ENCODE measurements at regions of chr1 and their contacts with region 1.

Region 1: GRCh38 chr1:201511941-201512539 is 5.1 kb upstream of the CSRP1 start:
- DNase-seq: no peak
- H3K4me3 ChIP-seq: no peak overlapping the region
- H3K27ac ChIP-seq: no peak overlapping the region
- H3K4me1 ChIP-seq: peaks cover 3 to 5% (median 5%) of the 10 kb centered on the region in 4 experiments; a peak in 6 of 7 replicates
- H3K27me3 ChIP-seq: peaks cover under 1 to 18% (median 12%) of the 10 kb centered on the region in 4 experiments
- CTCF ChIP-seq: no peak
- EP300 ChIP-seq: no peak
- POLR2A ChIP-seq: no peak
- RAD21 ChIP-seq: no peak

Region 2: DNA sequence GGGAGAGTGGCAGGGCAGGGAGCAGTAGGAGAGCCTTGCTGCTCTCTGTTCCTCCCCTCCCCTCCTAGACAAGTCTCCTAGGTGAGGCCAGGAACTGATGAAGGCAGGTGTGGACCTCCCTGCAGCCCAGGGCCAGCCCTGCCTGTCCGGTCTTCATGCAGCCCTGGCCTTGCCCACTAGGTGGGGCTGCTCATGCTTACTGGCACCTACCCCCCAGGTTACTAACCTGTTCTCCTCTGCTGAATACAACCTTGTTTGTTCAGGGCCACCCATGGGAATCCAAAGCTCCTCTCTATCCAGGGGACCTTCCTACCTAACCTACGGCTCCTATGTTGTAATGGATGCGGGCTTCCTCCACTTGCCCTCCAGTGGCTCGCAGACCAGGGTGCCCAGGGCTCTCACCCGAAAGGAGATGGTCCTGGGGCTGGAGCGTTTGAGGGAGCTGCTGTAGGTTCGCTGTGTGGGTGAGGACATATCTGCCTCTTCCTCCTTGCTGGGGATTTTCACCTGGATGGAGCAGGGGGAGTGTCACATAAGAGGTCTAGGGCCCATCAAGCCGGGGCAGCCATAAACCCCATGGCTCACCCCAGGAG is 126.6 kb before region 1 on chr1:
- CTCF ChIA-PET with region 1: interaction called, 15 read pairs
- POLR2A ChIA-PET with region 1: no interaction called
- DNase-seq: peak; percentile 38 to 95
- H3K4me3 ChIP-seq: no peak overlapping the region
- H3K27ac ChIP-seq: no peak overlapping the region
- H3K4me1 ChIP-seq: peaks cover 0 to 2% (median 0%) of the 10 kb centered on the region in 4 experiments; a peak in 1 of 7 replicates
- H3K27me3 ChIP-seq: no peaks in the 10 kb centered on the region
- CTCF ChIP-seq: peak; percentile 92 to 99 (median 98)
- EP300 ChIP-seq: no peak
- POLR2A ChIP-seq: no peak
- RAD21 ChIP-seq: peak; percentile 74 to 84

Region 3: GRCh38 chr1:201456499-201457309 is 55.3 kb before region 1 on chr1:
- CTCF ChIA-PET with region 1: interaction called, 53 read pairs
- POLR2A ChIA-PET with region 1: no interaction called
- DNase-seq: no peak
- H3K4me3 ChIP-seq: no peak overlapping the region
- H3K27ac ChIP-seq: no peak overlapping the region
- H3K4me1 ChIP-seq: peaks cover 2 to 9% (median 5%) of the 10 kb centered on the region in 4 experiments
- H3K27me3 ChIP-seq: no peaks in the 10 kb centered on the region
- CTCF ChIP-seq: no peak
- EP300 ChIP-seq: no peak
- POLR2A ChIP-seq: no peak
- RAD21 ChIP-seq: no peak

Region 4: DNA sequence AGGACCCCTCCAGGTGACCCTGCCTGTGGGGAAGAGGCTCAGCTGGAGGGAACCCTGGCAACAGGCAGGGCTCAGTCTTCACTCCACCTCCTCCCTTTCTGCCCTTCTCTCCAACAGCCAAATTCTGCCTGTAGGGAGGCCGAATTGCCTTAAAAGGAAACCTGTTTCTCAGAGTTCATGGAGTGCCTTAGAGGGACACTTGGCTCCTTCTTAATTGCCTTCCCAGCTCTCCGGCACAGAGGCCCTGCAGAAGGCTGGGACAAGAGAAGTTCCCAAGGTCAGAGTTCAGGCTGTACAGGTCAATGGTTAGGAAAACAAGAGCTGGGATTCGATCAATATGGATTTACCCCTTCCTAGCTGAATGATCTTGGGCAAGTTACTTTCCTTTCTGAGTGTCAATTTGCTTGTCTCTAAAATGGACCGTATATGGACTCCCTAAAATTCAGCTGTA is 11.3 kb before region 1 on chr1:
- CTCF ChIA-PET with region 1: interaction called, 929 read pairs
- POLR2A ChIA-PET with region 1: interaction called, 52 read pairs
- DNase-seq: no peak
- H3K4me3 ChIP-seq: no peak overlapping the region
- H3K27ac ChIP-seq: peak overlapping the region; percentile 63
- H3K4me1 ChIP-seq: peaks cover 11 to 27% (median 21%) of the 10 kb centered on the region in 4 experiments
- H3K27me3 ChIP-seq: peaks cover 0 to 2% (median under 1%) of the 10 kb centered on the region in 4 experiments; a peak in 4 of 7 replicates
- CTCF ChIP-seq: no peak
- EP300 ChIP-seq: no peak
- POLR2A ChIP-seq: no peak
- RAD21 ChIP-seq: no peak

Region 5: GRCh38 chr1:201828820-201829774 is 317.1 kb after region 1 on chr1 and contains the start of gene IPO9:
- CTCF ChIA-PET with region 1: interaction called, 11 read pairs
- POLR2A ChIA-PET with region 1: no interaction called
- DNase-seq: peak; percentile 82 to 99
- H3K4me3 ChIP-seq: peak within 1 kb of the TSS; percentile 79 to 100 (median 98)
- H3K27ac ChIP-seq: peak within 1 kb of the TSS; percentile 96
- H3K4me1 ChIP-seq: peaks cover 0 to 5% (median 1%) of the 10 kb centered on the region in 4 experiments; a peak in 3 of 7 replicates
- H3K27me3 ChIP-seq: no peaks in the 10 kb centered on the region
- CTCF ChIP-seq: peak; percentile 77 to 97 (median 80)
- EP300 ChIP-seq: no peak
- POLR2A ChIP-seq: peak; percentile 42 to 85
- RAD21 ChIP-seq: peak; percentile 19 to 29; a peak in 1 of 4 replicates
- total RNA-seq, gene IPO9: 122 and 124 TPM in 2 replicates